Thyroid gland (tissue), 4 donors: ENCODE measurements at regions of chr11 and their contacts with region 1.

Region 1: DNA sequence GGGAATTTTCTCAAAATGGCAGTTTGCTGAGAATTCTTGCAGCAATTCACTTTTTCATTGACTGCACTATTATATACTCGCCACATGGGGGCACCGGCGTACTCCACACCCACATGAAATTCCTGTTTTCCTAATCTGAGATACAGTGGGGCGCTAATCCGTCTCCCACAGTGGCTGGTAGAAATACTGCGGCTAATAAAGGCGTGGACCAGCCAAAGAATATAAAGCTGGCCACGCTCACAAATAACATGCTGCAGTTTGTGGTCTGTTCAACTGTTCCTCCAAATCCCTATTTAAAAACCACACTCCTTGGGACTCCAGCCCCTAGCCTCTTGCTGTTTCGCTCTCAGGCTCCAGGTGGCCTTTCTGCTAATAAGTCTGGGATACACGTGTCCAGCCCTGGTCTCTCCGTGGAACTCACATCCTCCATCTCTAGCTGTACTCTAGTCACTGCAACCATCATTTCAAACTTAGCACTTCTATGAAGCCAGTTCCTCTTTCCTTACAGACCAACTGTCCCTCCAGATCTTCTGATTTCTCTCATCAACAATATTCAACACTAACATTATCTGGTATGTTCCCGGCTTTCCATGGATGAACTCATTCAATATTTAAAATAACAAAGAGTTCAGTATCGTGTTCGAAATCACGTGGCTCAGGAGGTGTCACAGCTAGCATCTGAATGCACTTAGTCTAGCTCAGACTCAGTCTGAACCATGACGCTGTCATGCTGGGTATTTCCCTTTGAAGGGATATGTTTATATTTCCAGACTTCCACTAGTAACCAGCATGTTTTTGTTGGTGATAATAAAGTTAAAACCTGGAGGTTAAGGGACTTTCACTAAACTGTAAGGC is 22.0 kb downstream of the TBRG1 start:
- DNase-seq: peak; percentile 59 to 64
- H3K4me3 ChIP-seq: no peak overlapping the region
- H3K27ac ChIP-seq: no peak overlapping the region
- H3K4me1 ChIP-seq: peaks cover 3 to 4% of the 10 kb centered on the region in 2 donors
- H3K27me3 ChIP-seq: no peaks in the 10 kb centered on the region
- CTCF ChIP-seq: peak; percentile 61 to 90 (median 74)
- POLR2A ChIP-seq: no peak

Region 2: GRCh38 chr11:124837491-124837856 is 192.8 kb after region 1 on chr11:
- intact Hi-C with region 1: loop called (anchors 5 kb)
- DNase-seq: peak; percentile 23 to 39
- H3K4me3 ChIP-seq: no peak overlapping the region
- H3K27ac ChIP-seq: peak overlapping the region in 1 of 3 donors; percentile 92
- H3K4me1 ChIP-seq: peaks cover 12 to 31% of the 10 kb centered on the region in 2 donors
- H3K27me3 ChIP-seq: no peaks in the 10 kb centered on the region
- CTCF ChIP-seq: peak in 5 of 6 experiments; percentile 22 to 61 (median 41)
- POLR2A ChIP-seq: no peak